ENCODE measurements at regions of chr9 and their contacts with region 1.

Region 1: GRCh38 chr9:136991993-136992818 is at the start of gene PAXX:
- DNase-seq: peak; percentile 89 to 97 (median 94)
- ATAC-seq: peak; percentile 91
- H3K4me3 ChIP-seq: peak within 1 kb of the TSS; percentile 89
- H3K4me3 Mint-ChIP-seq: peak within 1 kb of the TSS; percentile 91
- H3K27ac ChIP-seq: peak within 1 kb of the TSS; percentile 57 to 76
- H3K27ac Mint-ChIP-seq: peak within 1 kb of the TSS; percentile 82
- H3K4me1 ChIP-seq: peaks cover 51% of the 10 kb centered on the region
- H3K4me1 Mint-ChIP-seq: peaks cover 35% of the 10 kb centered on the region
- H3K27me3 ChIP-seq: no peaks in the 10 kb centered on the region
- H3K27me3 Mint-ChIP-seq: peaks cover 8% of the 10 kb centered on the region
- CTCF ChIP-seq: no peak
- total RNA-seq, gene PAXX: 67.0 to 67.8 TPM

Region 2: GRCh38 chr9:136931611-136932130 is 60.5 kb before region 1 on chr9:
- CTCF ChIA-PET with region 1: no interaction called
- POLR2A ChIA-PET with region 1: no interaction called
- intact Hi-C with region 1: no loop called
- DNase-seq: no peak
- ATAC-seq: no peak
- H3K4me3 ChIP-seq: no peak overlapping the region
- H3K4me3 Mint-ChIP-seq: no peak overlapping the region
- H3K27ac ChIP-seq: no peak overlapping the region
- H3K27ac Mint-ChIP-seq: no peak overlapping the region
- H3K4me1 ChIP-seq: no peaks in the 10 kb centered on the region
- H3K4me1 Mint-ChIP-seq: no peaks in the 10 kb centered on the region
- H3K27me3 ChIP-seq: no peaks in the 10 kb centered on the region
- H3K27me3 Mint-ChIP-seq: no peaks in the 10 kb centered on the region
- CTCF ChIP-seq: no peak

Region 3: DNA sequence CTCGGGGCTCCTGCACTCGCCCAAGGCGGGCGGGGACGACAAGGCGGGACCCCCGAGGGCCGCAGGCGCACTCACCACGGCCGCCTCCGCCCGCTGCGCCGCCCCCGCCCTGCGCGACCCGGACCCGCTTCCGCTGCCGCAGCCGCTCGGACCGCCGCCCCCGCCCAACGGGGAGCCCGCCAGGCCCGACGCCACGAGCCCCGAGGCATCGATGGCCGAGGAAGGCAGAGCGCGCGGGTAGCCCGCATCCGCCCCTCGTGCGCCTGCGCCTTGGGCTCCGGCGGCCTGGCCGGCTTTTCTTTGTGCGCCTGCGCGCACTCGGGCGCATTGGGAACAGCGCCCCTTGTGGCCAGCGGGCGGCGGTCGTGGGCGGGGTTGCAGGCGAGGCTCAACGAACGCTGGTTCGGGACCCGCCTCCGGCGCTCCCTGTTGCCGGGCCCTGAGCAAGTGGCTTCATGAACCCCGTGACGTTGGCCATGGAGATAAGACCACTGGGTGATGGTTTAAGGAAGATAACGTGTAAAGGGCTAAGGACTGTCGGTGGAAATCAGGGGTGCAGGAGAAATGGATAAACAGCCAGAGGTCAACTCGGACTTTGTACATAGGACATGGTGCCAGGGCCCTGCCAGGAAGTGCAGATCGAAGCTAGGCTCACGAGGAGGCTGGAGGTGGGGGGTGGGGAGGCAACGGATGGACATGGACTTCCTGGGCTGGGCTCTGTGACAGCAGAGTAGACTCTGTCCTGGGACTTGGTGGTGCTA is 47.5 kb before region 1 on chr9 and contains the starts of genes C8G and FBXW5:
- CTCF ChIA-PET with region 1: interaction called, 3 read pairs
- POLR2A ChIA-PET with region 1: interaction called, 17 read pairs
- intact Hi-C with region 1: no loop called
- DNase-seq: peak; percentile 84 to 97 (median 94)
- ATAC-seq: peak; percentile 86
- H3K4me3 ChIP-seq: peak within 1 kb of the TSS; percentile 69
- H3K4me3 Mint-ChIP-seq: peak within 1 kb of the TSS; percentile 87
- H3K27ac ChIP-seq: peak within 1 kb of the TSS in 1 of 2 donors; percentile 21
- H3K27ac Mint-ChIP-seq: peak within 1 kb of the TSS; percentile 59
- H3K4me1 ChIP-seq: peaks cover 49% of the 10 kb centered on the region
- H3K4me1 Mint-ChIP-seq: peaks cover 5% of the 10 kb centered on the region
- H3K27me3 ChIP-seq: no peaks in the 10 kb centered on the region
- H3K27me3 Mint-ChIP-seq: no peaks in the 10 kb centered on the region
- CTCF ChIP-seq: peak; percentile 96
- total RNA-seq, gene C8G: not detected
- total RNA-seq, gene FBXW5: 41.0 to 41.7 TPM

Region 4: GRCh38 chr9:136949817-136950655 is 42.2 kb before region 1 on chr9:
- CTCF ChIA-PET with region 1: no interaction called
- POLR2A ChIA-PET with region 1: interaction called, 17 read pairs
- intact Hi-C with region 1: loop called in 1 of 2 experiments (anchors 2 kb)
- DNase-seq: peak; percentile 93 to 97 (median 96)
- ATAC-seq: peak; percentile 97
- H3K4me3 ChIP-seq: peak overlapping the region; percentile 69
- H3K4me3 Mint-ChIP-seq: peak overlapping the region; percentile 83
- H3K27ac ChIP-seq: peak overlapping the region; percentile 56 to 75
- H3K27ac Mint-ChIP-seq: peak overlapping the region; percentile 86
- H3K4me1 ChIP-seq: peaks cover 38% of the 10 kb centered on the region
- H3K4me1 Mint-ChIP-seq: peaks cover 5% of the 10 kb centered on the region
- H3K27me3 ChIP-seq: no peaks in the 10 kb centered on the region
- H3K27me3 Mint-ChIP-seq: no peaks in the 10 kb centered on the region
- CTCF ChIP-seq: peak; percentile 42

Region 5: DNA sequence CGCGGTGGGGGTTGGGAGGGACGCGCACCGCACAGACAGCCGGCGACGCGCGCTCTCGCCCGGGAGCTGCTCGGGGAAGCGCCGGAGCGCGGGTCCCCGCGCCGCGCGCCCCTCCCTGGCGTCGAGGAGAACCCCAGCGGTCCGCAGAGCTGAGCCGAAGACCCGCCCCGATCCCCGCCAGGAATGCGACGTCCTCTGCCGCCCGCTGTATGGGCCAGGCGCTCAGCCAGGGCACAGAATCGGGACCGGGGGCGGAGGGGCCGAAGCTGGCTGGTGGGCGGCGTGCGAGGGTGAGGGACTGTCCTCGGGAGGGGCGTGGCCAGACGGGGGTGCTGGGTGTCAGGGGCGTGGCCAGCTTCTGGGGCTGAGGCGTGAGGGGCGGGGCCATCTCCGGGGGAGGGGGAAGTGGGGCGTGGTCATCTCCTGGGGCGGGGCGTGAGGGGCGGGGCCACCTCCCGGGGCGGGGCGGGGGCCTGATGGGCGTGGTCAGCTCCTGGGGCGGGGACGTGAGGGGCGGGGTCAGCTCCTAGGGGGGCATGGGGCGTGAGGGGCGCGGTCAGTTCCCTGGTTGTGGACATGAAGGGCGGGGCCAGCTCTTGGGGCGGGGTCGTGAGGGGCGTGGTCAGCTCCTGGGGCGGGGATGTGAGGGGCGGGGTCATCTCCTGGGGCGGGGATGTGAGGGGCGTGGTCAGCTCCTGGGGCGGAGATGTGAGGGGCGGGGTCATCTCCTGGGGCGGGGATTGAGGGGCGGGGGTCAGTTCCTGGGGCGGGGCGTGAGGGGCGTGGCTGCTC is 13.9 kb before region 1 on chr9:
- CTCF ChIA-PET with region 1: interaction called, 3 read pairs
- POLR2A ChIA-PET with region 1: interaction called, 11 read pairs
- intact Hi-C with region 1: loop called (anchors 1 to 2 kb)
- DNase-seq: peak; percentile 42 to 88 (median 66)
- ATAC-seq: peak; percentile 69
- H3K4me3 ChIP-seq: peak overlapping the region; percentile 29
- H3K4me3 Mint-ChIP-seq: no peak overlapping the region
- H3K27ac ChIP-seq: no peak overlapping the region
- H3K27ac Mint-ChIP-seq: no peak overlapping the region
- H3K4me1 ChIP-seq: peaks cover 57% of the 10 kb centered on the region
- H3K4me1 Mint-ChIP-seq: peaks cover 20% of the 10 kb centered on the region
- H3K27me3 ChIP-seq: peaks cover 1 to 5% of the 10 kb centered on the region in 2 experiments
- H3K27me3 Mint-ChIP-seq: peaks cover 14% of the 10 kb centered on the region
- CTCF ChIP-seq: no peak

Region 6: GRCh38 chr9:137046098-137046787 is 54.0 kb after region 1 on chr9 and contains the start of gene NPDC1:
- CTCF ChIA-PET with region 1: interaction called, 11 read pairs
- POLR2A ChIA-PET with region 1: no interaction called
- intact Hi-C with region 1: no loop called
- DNase-seq: peak; percentile 67 to 90 (median 75)
- ATAC-seq: peak; percentile 87
- H3K4me3 ChIP-seq: peak within 1 kb of the TSS; percentile 55
- H3K4me3 Mint-ChIP-seq: peak within 1 kb of the TSS; percentile 51
- H3K27ac ChIP-seq: no peak within 1 kb of the TSS
- H3K27ac Mint-ChIP-seq: no peak within 1 kb of the TSS
- H3K4me1 ChIP-seq: peaks cover 44% of the 10 kb centered on the region
- H3K4me1 Mint-ChIP-seq: no peaks in the 10 kb centered on the region
- H3K27me3 ChIP-seq: peaks cover 68 to 69% of the 10 kb centered on the region in 2 experiments
- H3K27me3 Mint-ChIP-seq: peaks cover 44% of the 10 kb centered on the region
- CTCF ChIP-seq: peak; percentile 77
- total RNA-seq, gene NPDC1: 15.3 to 16.0 TPM

Region 7: GRCh38 chr9:137406876-137407589 is 414.8 kb after region 1 on chr9:
- CTCF ChIA-PET with region 1: no interaction called
- POLR2A ChIA-PET with region 1: no interaction called
- intact Hi-C with region 1: loop called in 1 of 2 experiments (anchors 5 kb)
- DNase-seq: peak; percentile 42 to 82 (median 68)
- ATAC-seq: peak; percentile 99
- H3K4me3 ChIP-seq: no peak overlapping the region
- H3K4me3 Mint-ChIP-seq: no peak overlapping the region
- H3K27ac ChIP-seq: no peak overlapping the region
- H3K27ac Mint-ChIP-seq: no peak overlapping the region
- H3K4me1 ChIP-seq: peaks cover 29% of the 10 kb centered on the region
- H3K4me1 Mint-ChIP-seq: no peaks in the 10 kb centered on the region
- H3K27me3 ChIP-seq: peaks cover 0 to 10% of the 10 kb centered on the region in 2 experiments
- H3K27me3 Mint-ChIP-seq: peaks cover 5% of the 10 kb centered on the region
- CTCF ChIP-seq: peak; percentile 65